ENCODE measurements at regions of chr4 and their contacts with region 1.

Region 1: GRCh38 chr4:142901166-142901662 is 55.1 kb upstream of the INPP4B start:
- DNase-seq: no peak
- H3K4me3 Mint-ChIP-seq: no peak overlapping the region
- H3K27ac Mint-ChIP-seq: no peak overlapping the region
- H3K4me1 Mint-ChIP-seq: no peaks in the 10 kb centered on the region
- H3K27me3 Mint-ChIP-seq: peaks cover 27% of the 10 kb centered on the region
- CTCF ChIP-seq: no peak

Region 2: DNA sequence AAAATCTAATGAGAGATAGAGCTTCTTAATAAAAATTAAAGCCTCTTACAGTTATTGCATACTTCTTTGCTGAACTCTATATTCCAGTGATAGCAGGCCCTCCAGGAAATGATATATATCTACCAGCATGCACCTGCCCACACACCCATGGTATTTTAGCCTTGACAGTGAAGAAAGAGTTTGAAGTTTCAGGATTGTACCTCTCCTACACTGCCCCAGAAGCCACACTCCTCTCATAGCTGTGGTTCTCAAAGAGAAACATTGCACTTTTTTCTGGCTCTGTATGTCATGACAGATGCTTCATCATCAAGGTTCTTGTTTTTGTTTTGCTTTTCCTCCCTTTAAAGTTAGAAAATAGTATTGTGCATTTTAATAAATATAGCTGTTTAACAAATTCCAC is 89.1 kb before region 1 on chr4:
- CTCF ChIA-PET with region 1: no interaction called
- intact Hi-C with region 1: no loop called
- DNase-seq: no peak
- H3K4me3 Mint-ChIP-seq: no peak overlapping the region
- H3K27ac Mint-ChIP-seq: no peak overlapping the region
- H3K4me1 Mint-ChIP-seq: peaks cover 2% of the 10 kb centered on the region
- H3K27me3 Mint-ChIP-seq: no peaks in the 10 kb centered on the region
- CTCF ChIP-seq: no peak

Region 3: GRCh38 chr4:142861351-142861750 is 39.9 kb before region 1 on chr4:
- CTCF ChIA-PET with region 1: no interaction called
- intact Hi-C with region 1: loop called (anchors 2 kb)
- DNase-seq: no peak
- H3K4me3 Mint-ChIP-seq: no peak overlapping the region
- H3K27ac Mint-ChIP-seq: no peak overlapping the region
- H3K4me1 Mint-ChIP-seq: no peaks in the 10 kb centered on the region
- H3K27me3 Mint-ChIP-seq: no peaks in the 10 kb centered on the region
- CTCF ChIP-seq: no peak